B cell (primary cell): ENCODE measurements at regions of chr19 and their contacts with region 1.

Region 1: GRCh38 chr19:17069218-17069617 is 6.0 kb downstream of the HAUS8 start:
- DNase-seq: no peak
- ATAC-seq: no peak
- H3K4me3 ChIP-seq: no peak overlapping the region
- H3K4me3 Mint-ChIP-seq: no peak overlapping the region
- H3K27ac ChIP-seq: no peak overlapping the region
- H3K27ac Mint-ChIP-seq: no peak overlapping the region
- H3K4me1 ChIP-seq: peaks cover 24 to 45% of the 10 kb centered on the region in 2 donors
- H3K4me1 Mint-ChIP-seq: peaks cover 56% of the 10 kb centered on the region
- H3K27me3 ChIP-seq: no peaks in the 10 kb centered on the region
- H3K27me3 Mint-ChIP-seq: no peaks in the 10 kb centered on the region
- CTCF ChIP-seq: no peak

Region 2: GRCh38 chr19:16509141-16510061 is 559.8 kb before region 1 on chr19:
- CTCF ChIA-PET with region 1: no interaction called
- POLR2A ChIA-PET with region 1: no interaction called
- intact Hi-C with region 1: no loop called
- DNase-seq: peak; percentile 10
- ATAC-seq: no peak
- H3K4me3 ChIP-seq: no peak overlapping the region
- H3K4me3 Mint-ChIP-seq: no peak overlapping the region
- H3K27ac ChIP-seq: no peak overlapping the region
- H3K27ac Mint-ChIP-seq: no peak overlapping the region
- H3K4me1 ChIP-seq: no peaks in the 10 kb centered on the region
- H3K4me1 Mint-ChIP-seq: no peaks in the 10 kb centered on the region
- H3K27me3 ChIP-seq: no peaks in the 10 kb centered on the region
- H3K27me3 Mint-ChIP-seq: no peaks in the 10 kb centered on the region
- CTCF ChIP-seq: no peak

Region 3: DNA sequence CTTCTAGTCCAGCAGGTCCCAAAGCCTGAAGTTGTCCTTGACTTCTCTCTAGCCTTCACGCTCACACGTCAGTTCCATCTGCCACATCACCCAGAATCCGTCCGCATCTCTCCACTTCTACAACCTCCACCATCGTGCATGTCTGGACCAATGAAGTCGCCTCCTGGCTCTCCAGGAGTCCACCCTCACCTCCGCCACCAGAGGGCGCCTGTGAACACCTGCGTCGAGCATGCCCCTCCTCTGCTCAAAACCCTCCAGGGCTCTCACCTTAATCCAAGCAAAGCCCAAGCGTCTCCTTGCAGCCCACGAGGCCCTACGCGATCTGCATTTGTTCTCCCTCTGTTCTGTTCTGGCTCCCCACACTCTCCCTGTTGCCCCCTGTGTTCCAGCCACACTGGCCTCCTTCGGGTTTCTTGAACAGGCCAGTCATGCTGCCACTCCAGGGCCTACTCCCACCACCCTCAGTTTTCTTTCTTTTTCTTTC is 191.7 kb after region 1 on chr19:
- CTCF ChIA-PET with region 1: interaction called, 4 read pairs
- POLR2A ChIA-PET with region 1: no interaction called
- intact Hi-C with region 1: loop called (anchors 1 kb)
- DNase-seq: peak; percentile 89
- ATAC-seq: peak; percentile 99
- H3K4me3 ChIP-seq: no peak overlapping the region
- H3K4me3 Mint-ChIP-seq: no peak overlapping the region
- H3K27ac ChIP-seq: no peak overlapping the region
- H3K27ac Mint-ChIP-seq: no peak overlapping the region
- H3K4me1 ChIP-seq: peaks cover 0 to 10% of the 10 kb centered on the region in 2 donors
- H3K4me1 Mint-ChIP-seq: peaks cover 10% of the 10 kb centered on the region
- H3K27me3 ChIP-seq: no peaks in the 10 kb centered on the region
- H3K27me3 Mint-ChIP-seq: no peaks in the 10 kb centered on the region
- CTCF ChIP-seq: peak; percentile 91